Activated CD4-positive, alpha-beta T cell treated with anti-CD3 and anti-CD28 coated beads, Interleukin-2, amount 10 ng/mL, durations not matched to agents 24 days and 14 days (primary cell): ENCODE measurements at regions of chr6 and their contacts with region 1.

Region 1: DNA sequence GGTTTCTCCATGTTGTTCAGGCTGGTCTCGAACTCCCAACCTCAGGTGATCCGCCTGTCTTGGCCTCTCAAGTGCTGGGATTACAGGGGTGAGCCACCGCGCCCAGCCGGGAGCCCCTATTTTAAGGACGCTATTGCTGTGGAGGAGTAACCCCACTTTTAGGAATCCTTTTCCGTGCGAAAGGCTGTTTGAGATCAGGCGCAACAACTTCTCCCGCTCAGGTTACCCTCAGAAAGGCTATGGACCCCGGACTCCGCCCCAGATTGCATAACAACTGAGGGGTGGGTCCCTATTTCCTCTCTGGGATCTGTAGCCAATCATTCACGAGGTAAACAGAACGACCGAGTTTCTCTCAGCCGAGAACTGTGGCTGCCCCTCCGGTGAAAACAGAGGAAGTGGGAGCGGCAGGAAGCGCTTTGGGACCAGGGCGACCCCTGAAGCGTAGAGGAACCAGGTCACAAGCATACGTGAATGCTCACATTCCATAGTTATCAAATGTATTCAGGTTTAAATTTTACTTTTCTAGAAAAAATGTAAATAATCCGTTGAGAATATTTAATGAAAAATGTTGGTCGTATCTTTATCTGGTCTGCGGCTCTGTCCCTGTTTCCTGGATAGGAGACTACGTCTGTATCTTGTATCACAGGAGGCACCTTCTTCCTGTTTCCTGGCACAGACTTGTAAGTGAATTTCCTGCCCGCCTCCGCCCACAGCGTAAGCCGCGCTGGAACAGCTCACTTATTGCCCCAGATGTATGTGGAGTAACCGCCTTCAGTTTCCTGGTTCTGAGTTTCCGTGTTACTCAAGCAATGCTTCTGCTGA is 26.8 kb downstream of the HLA-E start:
- DNase-seq: peak; percentile 97
- H3K4me3 Mint-ChIP-seq: peak overlapping the region; percentile 83
- H3K27ac Mint-ChIP-seq: peak overlapping the region; percentile 97
- H3K4me1 Mint-ChIP-seq: peaks cover 44% of the 10 kb centered on the region
- H3K27me3 Mint-ChIP-seq: no peaks in the 10 kb centered on the region

Region 2: DNA sequence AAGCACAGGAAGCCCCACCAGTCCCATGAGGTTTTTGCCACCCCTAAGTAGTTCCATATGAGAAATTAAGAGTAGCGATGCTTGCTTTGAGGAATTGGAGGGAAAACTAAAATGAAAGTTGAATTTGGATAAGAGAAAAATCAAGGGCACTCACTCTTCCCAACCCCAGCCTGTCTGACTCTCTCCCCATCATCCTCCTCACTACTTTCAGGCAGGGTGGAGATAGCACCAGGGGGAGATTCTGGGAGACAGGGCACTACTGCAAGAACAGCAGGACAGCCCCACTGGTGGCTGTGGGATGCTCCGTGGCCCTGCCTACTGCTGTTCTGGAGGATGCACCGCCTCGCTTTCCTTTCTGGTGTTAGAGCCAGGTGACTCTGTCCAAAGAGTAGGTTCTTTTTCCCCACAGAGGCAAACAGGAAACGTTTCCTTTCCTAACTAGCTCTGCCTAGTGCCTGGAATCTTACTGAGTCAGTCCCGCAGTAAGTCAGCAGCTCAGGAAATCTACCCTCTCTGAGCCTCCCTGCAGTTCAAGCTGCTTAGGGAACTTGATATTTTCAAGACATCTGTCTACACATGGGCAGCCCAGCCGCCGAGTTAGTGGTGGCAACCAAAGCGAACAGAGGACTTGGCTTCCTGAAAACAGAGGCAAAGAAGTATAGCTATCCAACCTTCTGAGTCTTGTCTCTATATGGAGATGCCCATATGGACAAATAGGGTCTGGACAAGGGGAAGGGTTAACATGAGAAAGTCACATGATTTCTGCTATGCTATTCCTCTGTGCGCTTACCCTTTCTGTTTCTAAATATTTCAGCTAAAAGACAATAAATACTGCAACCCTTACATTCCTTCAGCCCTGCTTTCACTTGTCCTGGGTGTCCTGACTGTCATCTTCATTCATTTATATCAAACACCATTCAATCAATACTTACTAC is 15.5 kb before region 1 on chr6:
- intact Hi-C with region 1: loop called (anchors 2 kb)
- DNase-seq: peak; percentile 72
- H3K4me3 Mint-ChIP-seq: peak overlapping the region; percentile 54
- H3K27ac Mint-ChIP-seq: peak overlapping the region; percentile 58
- H3K4me1 Mint-ChIP-seq: peaks cover 32% of the 10 kb centered on the region
- H3K27me3 Mint-ChIP-seq: no peaks in the 10 kb centered on the region